Activated CD4-positive, alpha-beta T cell treated with anti-CD3 and anti-CD28 coated beads for 36 hours (primary cell): ENCODE measurements at regions of chr13 and their contacts with region 1.

Region 1: GRCh38 chr13:61410669-61411297 is 4.9 kb downstream of the PCDH20 start:
- DNase-seq: no peak
- ATAC-seq: no peak
- H3K4me3 Mint-ChIP-seq: no peak overlapping the region
- H3K27ac Mint-ChIP-seq: no peak overlapping the region
- H3K4me1 Mint-ChIP-seq: no peaks in the 10 kb centered on the region
- H3K27me3 Mint-ChIP-seq: peaks cover 29% of the 10 kb centered on the region

Region 2: GRCh38 chr13:60448907-60449510 is 961.8 kb before region 1 on chr13:
- CTCF ChIA-PET with region 1: no interaction called
- POLR2A ChIA-PET with region 1: no interaction called
- intact Hi-C with region 1: loop called in 1 of 2 experiments (anchors 5 kb)
- DNase-seq: peak; percentile 9
- ATAC-seq: peak; percentile 39
- H3K4me3 Mint-ChIP-seq: no peak overlapping the region
- H3K27ac Mint-ChIP-seq: no peak overlapping the region
- H3K4me1 Mint-ChIP-seq: no peaks in the 10 kb centered on the region
- H3K27me3 Mint-ChIP-seq: no peaks in the 10 kb centered on the region

Region 3: GRCh38 chr13:60467098-60467497 is 943.7 kb before region 1 on chr13:
- CTCF ChIA-PET with region 1: no interaction called
- POLR2A ChIA-PET with region 1: no interaction called
- intact Hi-C with region 1: loop called in 1 of 2 experiments (anchors 5 kb)
- DNase-seq: no peak
- ATAC-seq: no peak
- H3K4me3 Mint-ChIP-seq: no peak overlapping the region
- H3K27ac Mint-ChIP-seq: no peak overlapping the region
- H3K4me1 Mint-ChIP-seq: no peaks in the 10 kb centered on the region
- H3K27me3 Mint-ChIP-seq: no peaks in the 10 kb centered on the region

Region 4: DNA sequence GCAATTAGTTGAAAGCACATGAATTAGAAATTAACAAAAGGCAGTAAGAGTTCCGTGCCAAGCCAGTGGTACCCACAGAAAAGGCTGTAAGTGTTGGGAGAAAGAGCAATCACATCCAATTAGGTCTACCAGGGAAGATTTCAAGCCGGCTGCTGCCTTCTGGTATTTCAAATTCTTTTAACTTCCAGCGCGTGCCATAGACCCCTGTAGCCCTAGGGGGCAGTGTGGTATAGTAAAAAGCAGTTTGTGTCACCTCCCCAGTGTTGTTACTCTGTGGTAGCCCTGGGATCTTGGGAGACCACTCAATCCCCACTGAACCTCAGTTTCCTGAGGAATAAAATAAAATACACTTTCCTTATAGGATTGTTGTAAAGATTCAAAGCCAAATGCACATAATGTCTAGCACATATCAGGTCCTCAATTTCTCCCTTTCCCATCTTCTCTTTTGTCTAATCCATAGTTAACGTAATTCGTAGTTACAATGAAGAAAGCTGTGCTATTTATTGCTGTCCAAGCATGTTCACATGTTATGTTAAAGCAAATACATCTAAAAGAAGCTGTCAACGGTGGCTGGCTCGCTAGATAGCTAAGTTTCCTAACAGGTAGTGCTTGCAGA is 783.6 kb before region 1 on chr13:
- CTCF ChIA-PET with region 1: no interaction called
- POLR2A ChIA-PET with region 1: no interaction called
- intact Hi-C with region 1: loop called in 1 of 2 experiments (anchors 2 kb)
- DNase-seq: peak; percentile 37
- ATAC-seq: peak; percentile 61
- H3K4me3 Mint-ChIP-seq: no peak overlapping the region
- H3K27ac Mint-ChIP-seq: no peak overlapping the region
- H3K4me1 Mint-ChIP-seq: no peaks in the 10 kb centered on the region
- H3K27me3 Mint-ChIP-seq: peaks cover 7% of the 10 kb centered on the region

Region 5: DNA sequence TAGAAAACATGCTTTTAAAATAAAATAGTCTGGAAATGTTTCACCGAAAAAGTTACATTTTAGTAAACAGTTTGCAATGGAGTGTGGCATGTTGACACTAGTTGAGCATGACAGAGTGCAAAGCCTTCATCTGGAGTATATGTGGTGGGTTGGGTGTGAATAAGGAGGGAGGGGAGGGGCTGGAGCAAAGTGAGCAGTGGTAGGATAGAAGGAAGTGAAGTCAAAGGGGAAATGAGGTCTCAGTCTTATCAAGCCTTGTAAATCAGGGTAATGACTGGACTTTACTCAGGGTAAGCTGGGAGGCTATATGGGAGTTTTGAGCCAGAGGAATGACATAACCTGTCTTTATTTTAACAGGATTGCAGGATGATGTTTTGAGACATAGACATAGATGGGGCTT is 218.0 kb before region 1 on chr13:
- CTCF ChIA-PET with region 1: no interaction called
- POLR2A ChIA-PET with region 1: no interaction called
- intact Hi-C with region 1: no loop called
- DNase-seq: no peak
- ATAC-seq: no peak
- H3K4me3 Mint-ChIP-seq: no peak overlapping the region
- H3K27ac Mint-ChIP-seq: no peak overlapping the region
- H3K4me1 Mint-ChIP-seq: no peaks in the 10 kb centered on the region
- H3K27me3 Mint-ChIP-seq: no peaks in the 10 kb centered on the region

Region 6: DNA sequence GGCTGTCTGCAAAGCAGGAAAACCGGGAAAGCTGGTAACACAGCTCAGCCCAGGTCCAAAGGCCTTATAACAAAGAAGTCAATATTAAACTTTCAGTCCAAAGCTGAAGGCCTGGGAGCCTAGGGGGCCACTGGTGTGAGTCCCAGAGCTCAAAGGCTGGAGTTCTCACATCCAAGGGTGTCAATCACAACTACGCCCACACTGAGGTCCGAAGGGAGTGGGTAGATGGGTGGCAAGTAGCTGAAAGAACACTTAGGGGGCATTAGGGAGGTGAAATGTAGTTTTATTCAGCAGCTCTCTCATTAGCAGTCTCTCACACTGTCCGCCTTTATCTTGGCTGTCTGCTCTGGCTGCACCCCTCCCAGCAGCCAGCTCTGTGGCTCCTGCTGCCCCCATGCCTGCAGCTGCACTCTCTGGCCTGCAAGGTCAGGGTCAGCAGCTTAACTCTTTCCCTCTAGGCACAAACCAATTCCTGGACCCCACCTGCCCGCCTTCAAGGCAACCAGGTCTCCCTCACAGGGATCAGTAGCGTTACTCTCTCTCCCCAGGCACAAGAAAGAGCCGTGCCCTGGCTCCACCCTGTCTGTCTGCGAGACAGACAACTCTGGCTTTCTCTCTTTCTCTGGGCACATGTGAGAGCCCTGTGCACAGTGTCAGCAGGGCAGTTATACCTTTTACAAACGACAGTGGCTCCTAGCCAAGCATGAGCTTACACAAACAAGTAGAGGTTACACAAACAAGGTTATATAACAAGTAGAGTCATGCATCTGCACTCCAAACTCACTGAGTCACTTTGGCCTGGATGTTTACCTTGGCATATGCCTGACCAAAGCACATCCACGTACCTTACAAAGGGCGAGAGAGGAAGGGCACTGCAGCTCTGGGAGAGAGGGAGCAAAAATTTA is 254.3 kb after region 1 on chr13:
- CTCF ChIA-PET with region 1: no interaction called
- POLR2A ChIA-PET with region 1: no interaction called
- intact Hi-C with region 1: no loop called
- DNase-seq: no peak
- ATAC-seq: no peak
- H3K4me3 Mint-ChIP-seq: no peak overlapping the region
- H3K27ac Mint-ChIP-seq: no peak overlapping the region
- H3K4me1 Mint-ChIP-seq: no peaks in the 10 kb centered on the region
- H3K27me3 Mint-ChIP-seq: no peaks in the 10 kb centered on the region

Region 7: DNA sequence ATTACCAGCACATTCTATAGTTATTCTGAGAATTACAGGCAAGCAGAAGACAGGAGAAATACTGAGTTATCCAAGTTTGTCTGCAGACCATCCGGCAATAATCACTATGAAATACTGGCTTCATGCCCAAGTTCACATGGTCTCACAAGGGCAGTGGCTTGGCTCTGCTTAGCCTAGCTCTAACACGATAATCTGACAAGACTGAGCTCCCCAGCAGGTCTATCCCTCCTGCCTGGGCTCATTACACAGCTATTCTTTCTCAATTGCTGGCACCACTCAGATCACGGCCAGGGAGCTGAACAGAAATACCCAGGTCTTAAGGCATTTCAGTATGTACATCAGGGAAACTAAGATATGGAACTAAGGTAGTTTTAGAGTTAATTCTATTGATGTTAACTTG is 366.5 kb after region 1 on chr13:
- CTCF ChIA-PET with region 1: no interaction called
- POLR2A ChIA-PET with region 1: no interaction called
- intact Hi-C with region 1: no loop called
- DNase-seq: no peak
- ATAC-seq: no peak
- H3K4me3 Mint-ChIP-seq: no peak overlapping the region
- H3K27ac Mint-ChIP-seq: no peak overlapping the region
- H3K4me1 Mint-ChIP-seq: no peaks in the 10 kb centered on the region
- H3K27me3 Mint-ChIP-seq: no peaks in the 10 kb centered on the region

Region 8: GRCh38 chr13:62119739-62120700 is 709.2 kb after region 1 on chr13:
- CTCF ChIA-PET with region 1: no interaction called
- POLR2A ChIA-PET with region 1: no interaction called
- intact Hi-C with region 1: no loop called
- DNase-seq: no peak
- ATAC-seq: no peak
- H3K4me3 Mint-ChIP-seq: no peak overlapping the region
- H3K27ac Mint-ChIP-seq: no peak overlapping the region
- H3K4me1 Mint-ChIP-seq: no peaks in the 10 kb centered on the region
- H3K27me3 Mint-ChIP-seq: no peaks in the 10 kb centered on the region